PC-9 (cell line): ENCODE measurements at regions of chr7 and their contacts with region 1.

Region 1: GRCh38 chr7:135672560-135673359 is 10.4 kb downstream of the STMP1 start:
- DNase-seq: peak in 1 of 2 experiments; percentile 38
- H3K4me3 ChIP-seq: no peak overlapping the region
- H3K27ac ChIP-seq: peak overlapping the region; percentile 2; the same call in 1 of the 2 replicates
- H3K4me1 ChIP-seq: peaks cover 8% of the 10 kb centered on the region
- H3K27me3 ChIP-seq: no peaks in the 10 kb centered on the region
- CTCF ChIP-seq: peak; percentile 95

Region 2: DNA sequence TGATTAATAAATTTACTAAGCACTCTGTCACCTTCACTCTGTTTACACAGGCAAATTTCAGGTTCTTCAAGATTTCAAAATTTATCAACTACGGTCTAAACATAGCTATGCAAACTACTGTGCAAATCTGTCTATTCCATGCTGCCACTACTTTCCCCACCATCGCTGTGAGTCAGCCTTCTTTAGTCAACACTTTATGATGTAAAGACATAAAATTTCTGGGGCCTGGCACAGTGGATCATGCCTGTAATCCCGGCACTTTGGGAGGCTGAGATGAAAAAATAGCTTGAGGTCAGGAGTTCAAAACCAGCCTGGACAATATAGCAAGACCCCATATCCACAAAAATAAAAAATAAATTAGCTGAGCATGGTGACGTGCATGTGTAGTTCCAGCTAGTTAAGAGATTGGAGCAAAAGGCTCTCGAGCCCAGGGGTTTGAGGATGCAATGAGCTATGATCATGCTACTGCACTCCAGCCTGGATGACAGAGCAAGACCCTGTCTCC is 205.5 kb before region 1 on chr7:
- CTCF ChIA-PET with region 1: no interaction called
- POLR2A ChIA-PET with region 1: no interaction called
- intact Hi-C with region 1: no loop called
- DNase-seq: no peak
- H3K4me3 ChIP-seq: no peak overlapping the region
- H3K27ac ChIP-seq: no peak overlapping the region
- H3K4me1 ChIP-seq: no peaks in the 10 kb centered on the region
- H3K27me3 ChIP-seq: no peaks in the 10 kb centered on the region
- CTCF ChIP-seq: no peak

Region 3: DNA sequence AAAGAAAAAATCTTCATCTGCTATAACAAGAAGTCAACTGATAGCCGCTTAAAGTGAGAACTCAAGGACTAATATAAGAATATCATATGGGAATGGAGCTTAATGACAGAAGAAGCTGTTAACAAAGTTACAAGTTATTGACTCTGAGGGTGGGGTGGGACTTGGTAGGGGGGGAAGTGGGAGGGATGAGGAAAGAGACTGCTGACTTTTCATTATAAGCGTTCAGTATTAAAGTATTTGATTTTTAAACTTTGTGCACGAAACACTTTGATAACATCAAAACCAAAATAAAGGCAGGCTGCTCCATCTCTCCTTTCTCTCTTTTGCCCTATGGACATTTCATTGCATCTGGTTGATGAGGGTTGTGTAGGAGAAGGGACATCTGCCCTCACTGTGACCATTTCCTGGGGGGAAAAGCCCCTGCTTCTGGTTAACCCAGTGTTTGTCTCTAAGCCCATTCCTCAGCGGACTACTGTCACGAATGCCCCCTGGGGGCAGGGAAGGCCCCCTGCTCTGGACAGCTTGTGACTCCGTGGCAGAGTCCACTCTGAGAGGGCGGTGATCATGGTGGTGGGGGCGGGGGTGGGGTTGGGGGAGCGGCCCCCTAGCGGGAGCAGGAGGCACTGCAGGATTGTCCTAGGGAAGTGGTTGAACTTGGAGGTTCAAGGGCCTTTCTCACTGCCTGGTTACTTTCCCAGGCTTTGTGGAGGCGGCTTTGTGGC is 37.8 kb after region 1 on chr7:
- CTCF ChIA-PET with region 1: interaction called, 6 read pairs
- POLR2A ChIA-PET with region 1: interaction called, 12 read pairs
- intact Hi-C with region 1: no loop called
- DNase-seq: no peak
- H3K4me3 ChIP-seq: no peak overlapping the region
- H3K27ac ChIP-seq: no peak overlapping the region
- H3K4me1 ChIP-seq: peaks cover 51% of the 10 kb centered on the region
- H3K27me3 ChIP-seq: no peaks in the 10 kb centered on the region
- CTCF ChIP-seq: peak; percentile 74

Region 4: DNA sequence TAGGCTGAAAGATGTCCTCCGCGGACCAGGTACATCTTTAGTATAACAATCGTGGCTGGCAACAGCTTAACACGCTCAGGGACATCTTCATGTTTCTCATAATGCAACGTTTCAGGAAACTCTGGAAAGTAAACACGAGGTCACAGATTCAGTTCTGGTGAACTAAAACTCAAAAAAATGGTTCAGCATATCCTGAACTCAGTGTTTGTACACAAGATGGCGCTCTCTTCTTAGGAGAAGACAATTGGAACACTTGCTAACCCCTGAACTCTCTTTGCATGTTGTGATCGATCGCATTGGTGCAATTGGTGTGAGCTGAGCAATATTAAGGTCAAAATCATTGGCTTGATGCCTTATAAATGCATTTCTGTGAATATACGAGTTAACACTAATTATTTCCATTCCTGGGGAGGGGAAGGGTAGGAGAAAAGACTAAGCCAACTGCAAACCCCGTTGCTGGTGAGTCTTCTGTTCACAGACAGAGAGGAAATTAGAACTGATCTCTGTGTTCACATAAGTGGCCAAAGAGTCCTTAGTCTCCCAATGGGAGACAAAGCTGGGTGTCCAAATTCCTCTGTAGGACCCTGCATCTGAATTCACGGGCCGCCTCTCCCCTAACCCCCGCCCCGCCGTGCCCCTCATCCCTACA is 128.4 kb after region 1 on chr7:
- CTCF ChIA-PET with region 1: interaction called, 4 read pairs
- POLR2A ChIA-PET with region 1: no interaction called
- intact Hi-C with region 1: loop called (anchors 2 kb)
- DNase-seq: peak; percentile 31 to 72
- H3K4me3 ChIP-seq: no peak overlapping the region; the same call in 1 of the 2 replicates
- H3K27ac ChIP-seq: no peak overlapping the region
- H3K4me1 ChIP-seq: peaks cover 14% of the 10 kb centered on the region
- H3K27me3 ChIP-seq: no peaks in the 10 kb centered on the region
- CTCF ChIP-seq: peak; percentile 94

Region 5: GRCh38 chr7:136009488-136010079 is 336.8 kb after region 1 on chr7:
- CTCF ChIA-PET with region 1: no interaction called
- POLR2A ChIA-PET with region 1: no interaction called
- intact Hi-C with region 1: loop called (anchors 1 kb)
- DNase-seq: peak in 1 of 2 experiments; percentile 55
- H3K4me3 ChIP-seq: no peak overlapping the region
- H3K27ac ChIP-seq: no peak overlapping the region
- H3K4me1 ChIP-seq: no peaks in the 10 kb centered on the region
- H3K27me3 ChIP-seq: no peaks in the 10 kb centered on the region
- CTCF ChIP-seq: peak; percentile 95